IMR-90 (cell line): ENCODE measurements at regions of chr14 and their contacts with region 1.

Region 1: GRCh38 chr14:65222440-65222858 is 120.1 kb upstream of the MAX start:
- DNase-seq: peak; percentile 66
- ATAC-seq: peak; percentile 93
- H3K4me3 ChIP-seq: no peak overlapping the region
- H3K27ac ChIP-seq: no peak overlapping the region
- H3K4me1 ChIP-seq: 0 out of 2 replicates have a peak, but pooled peaks cover 4% of the 10 kb centered on the region
- H3K27me3 ChIP-seq: no peaks in the 10 kb centered on the region
- CTCF ChIP-seq: peak; percentile 78
- POLR2A ChIP-seq: no peak
- RAD21 ChIP-seq: peak; percentile 78

Region 2: DNA sequence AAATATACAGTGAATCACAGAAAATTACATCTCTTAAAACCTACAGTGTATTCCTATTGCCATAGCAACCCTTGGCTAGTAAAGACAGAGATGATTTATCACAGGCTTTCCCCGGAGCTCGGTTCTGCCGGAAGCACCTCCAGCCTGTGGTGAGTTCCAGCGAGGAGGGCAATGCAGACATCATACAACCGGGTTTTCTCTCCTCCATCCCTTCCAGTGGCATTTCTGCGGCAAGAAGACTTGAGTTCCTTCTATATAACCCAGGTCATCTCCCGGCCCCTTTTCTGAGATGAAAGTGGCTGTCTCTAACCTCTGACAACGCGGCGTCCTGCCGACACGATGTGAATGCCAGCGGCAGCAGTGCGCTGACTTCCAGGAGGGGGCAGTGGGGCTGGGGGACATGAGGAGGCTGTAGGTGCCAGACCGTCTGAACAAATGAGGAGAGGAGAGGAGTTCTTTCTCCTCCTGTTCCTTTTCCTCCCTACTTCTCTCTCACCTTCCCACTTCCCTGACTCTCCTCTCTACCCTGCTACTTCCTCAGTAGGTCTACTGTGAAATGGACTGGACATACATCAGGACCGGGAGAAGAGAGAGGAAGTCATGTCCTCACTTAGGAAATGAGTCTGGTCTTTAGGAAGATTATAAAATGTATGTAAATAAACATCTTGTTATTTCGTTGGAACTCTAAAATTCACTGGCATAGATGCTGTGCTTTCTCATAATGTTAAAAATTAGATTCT is 51.5 kb before region 1 on chr14:
- CTCF ChIA-PET with region 1: no interaction called
- POLR2A ChIA-PET with region 1: no interaction called
- dilution Hi-C with region 1: no loop called
- in situ Hi-C with region 1: no loop called
- intact Hi-C with region 1: loop called (anchors 1 kb)
- DNase-seq: peak; percentile 81
- ATAC-seq: peak; percentile 66
- H3K4me3 ChIP-seq: peak overlapping the region; percentile 33
- H3K27ac ChIP-seq: no peak overlapping the region
- H3K4me1 ChIP-seq: peaks cover 11% of the 10 kb centered on the region
- H3K27me3 ChIP-seq: no peaks in the 10 kb centered on the region
- CTCF ChIP-seq: peak; percentile 39
- POLR2A ChIP-seq: no peak
- RAD21 ChIP-seq: peak; percentile 33; the same call in 1 of the 2 replicates

Region 3: DNA sequence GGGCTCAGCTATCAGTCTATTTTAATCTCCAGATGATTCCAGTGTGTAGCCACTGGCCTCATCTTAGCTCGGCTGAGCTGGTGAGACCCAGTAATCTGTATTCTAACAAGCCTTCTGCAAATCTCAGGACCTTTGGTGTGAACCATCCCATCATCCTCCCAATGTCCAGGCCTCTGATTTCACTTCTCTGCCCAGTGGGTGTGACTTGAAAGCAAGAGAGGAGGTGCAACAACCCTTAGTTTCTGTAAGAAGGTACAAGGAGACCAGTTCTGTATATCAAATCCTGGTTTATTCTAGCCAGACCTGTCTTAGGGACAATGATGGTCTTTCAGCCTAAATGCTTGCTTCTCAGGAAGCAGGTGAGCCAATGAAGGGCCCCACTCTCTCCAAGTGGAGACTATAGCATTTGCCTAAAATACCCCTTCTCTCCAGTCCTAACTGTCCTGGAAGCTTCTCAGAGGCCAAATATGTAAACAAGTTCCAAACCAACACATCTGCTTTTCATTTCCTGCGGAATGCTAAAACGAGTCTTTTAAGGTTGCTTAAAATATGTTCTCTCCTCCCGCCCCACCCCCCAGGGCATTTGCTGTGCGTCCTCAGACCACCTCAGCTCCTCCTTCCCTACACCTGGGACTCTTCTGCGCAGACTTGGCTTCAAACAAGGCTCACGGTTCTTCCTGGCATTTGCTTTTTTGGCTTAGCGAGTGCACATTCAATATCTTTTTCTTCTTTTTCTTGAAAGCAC is 111.7 kb after region 1 on chr14:
- CTCF ChIA-PET with region 1: no interaction called
- POLR2A ChIA-PET with region 1: interaction called, 4 read pairs
- dilution Hi-C with region 1: no loop called
- in situ Hi-C with region 1: no loop called
- intact Hi-C with region 1: loop called (anchors 1 kb)
- DNase-seq: peak; percentile 86
- ATAC-seq: peak; percentile 81
- H3K4me3 ChIP-seq: no peak overlapping the region
- H3K27ac ChIP-seq: peak overlapping the region; percentile 88
- H3K4me1 ChIP-seq: peaks cover 22% of the 10 kb centered on the region
- H3K27me3 ChIP-seq: no peaks in the 10 kb centered on the region
- CTCF ChIP-seq: no peak
- POLR2A ChIP-seq: no peak
- RAD21 ChIP-seq: no peak